A549 (cell line): ENCODE measurements at regions of chr2 and their contacts with region 1.

Region 1: GRCh38 chr2:109510136-109511028 is 103.4 kb downstream of the SEPTIN10 start:
- DNase-seq: peak; percentile 74 to 76
- ATAC-seq: peak; percentile 79 to 94
- H3K4me3 ChIP-seq: no peak overlapping the region
- H3K27ac ChIP-seq: no peak overlapping the region
- H3K4me1 ChIP-seq: peaks cover 4% of the 10 kb centered on the region; the same call in 1 of the 3 replicates
- CTCF ChIP-seq: peak; percentile 83
- EP300 ChIP-seq: no peak
- POLR2A ChIP-seq: no peak
- RAD21 ChIP-seq: peak; percentile 85 to 92

Region 2: GRCh38 chr2:108927936-108928659 is 582.3 kb before region 1 on chr2:
- CTCF ChIA-PET with region 1: interaction called, 18 read pairs
- POLR2A ChIA-PET with region 1: no interaction called
- DNase-seq: peak; percentile 61 to 64
- ATAC-seq: peak; percentile 80 to 92; a peak in 5 of 6 replicates
- H3K4me3 ChIP-seq: no peak overlapping the region
- H3K27ac ChIP-seq: no peak overlapping the region
- H3K4me1 ChIP-seq: no peaks in the 10 kb centered on the region
- CTCF ChIP-seq: peak; percentile 72
- EP300 ChIP-seq: no peak
- POLR2A ChIP-seq: no peak
- RAD21 ChIP-seq: peak; percentile 71 to 74

Region 3: DNA sequence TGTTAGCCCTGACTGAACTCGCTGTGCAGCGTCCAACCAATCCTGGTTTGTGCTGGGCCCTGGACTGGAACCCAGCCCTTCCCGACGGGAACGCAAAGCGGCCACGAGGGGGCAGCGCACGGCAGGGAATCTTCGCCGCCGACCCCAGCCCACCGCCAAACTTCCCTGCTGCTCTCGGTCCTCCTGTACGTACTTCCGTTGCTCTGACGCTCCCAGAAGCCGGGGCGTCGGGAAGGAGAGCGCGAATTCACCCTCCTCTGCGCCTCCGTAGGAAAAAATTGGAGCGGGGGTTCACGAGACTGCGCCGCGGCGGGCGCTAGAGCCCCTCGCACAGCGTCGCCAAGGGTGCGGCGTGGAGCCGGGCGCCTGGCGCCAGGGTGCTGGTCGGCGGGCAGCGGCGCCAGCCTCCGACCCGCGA is 382.3 kb before region 1 on chr2:
- CTCF ChIA-PET with region 1: interaction called, 110 read pairs
- POLR2A ChIA-PET with region 1: no interaction called
- DNase-seq: peak; percentile 77 to 82
- ATAC-seq: peak; percentile 76 to 92
- H3K4me3 ChIP-seq: peak overlapping the region; percentile 64
- H3K27ac ChIP-seq: peak overlapping the region; percentile 44 to 74; a peak in 4 of 6 replicates
- H3K4me1 ChIP-seq: peaks cover 14% of the 10 kb centered on the region
- CTCF ChIP-seq: peak; percentile 87
- EP300 ChIP-seq: no peak
- POLR2A ChIP-seq: no peak
- RAD21 ChIP-seq: peak; percentile 86 to 92

Region 4: GRCh38 chr2:109497463-109497862 is 12.9 kb before region 1 on chr2:
- CTCF ChIA-PET with region 1: interaction called, 39 read pairs
- POLR2A ChIA-PET with region 1: no interaction called
- DNase-seq: no peak
- ATAC-seq: no peak
- H3K4me3 ChIP-seq: no peak overlapping the region
- H3K27ac ChIP-seq: no peak overlapping the region
- H3K4me1 ChIP-seq: no peaks in the 10 kb centered on the region
- CTCF ChIP-seq: no peak
- EP300 ChIP-seq: no peak
- POLR2A ChIP-seq: no peak
- RAD21 ChIP-seq: no peak

Region 5: GRCh38 chr2:109529532-109530449 is 19.4 kb after region 1 on chr2:
- CTCF ChIA-PET with region 1: interaction called, 11 read pairs
- POLR2A ChIA-PET with region 1: no interaction called
- DNase-seq: no peak
- ATAC-seq: no peak
- H3K4me3 ChIP-seq: no peak overlapping the region
- H3K27ac ChIP-seq: no peak overlapping the region
- H3K4me1 ChIP-seq: no peaks in the 10 kb centered on the region
- CTCF ChIP-seq: no peak
- EP300 ChIP-seq: no peak
- POLR2A ChIP-seq: no peak
- RAD21 ChIP-seq: no peak

Region 6: GRCh38 chr2:109736177-109736827 is 225.9 kb after region 1 on chr2:
- CTCF ChIA-PET with region 1: interaction called, 13 read pairs
- POLR2A ChIA-PET with region 1: no interaction called
- DNase-seq: peak; percentile 17 to 74
- ATAC-seq: peak; percentile 70 to 90; a peak in 4 of 6 replicates
- H3K4me3 ChIP-seq: no peak overlapping the region
- H3K27ac ChIP-seq: no peak overlapping the region
- H3K4me1 ChIP-seq: 0 out of 3 replicates have a peak, but pooled peaks cover 3% of the 10 kb centered on the region
- CTCF ChIP-seq: peak; percentile 86
- EP300 ChIP-seq: no peak
- POLR2A ChIP-seq: no peak
- RAD21 ChIP-seq: peak; percentile 88 to 89